Endothelial cell of umbilical vein (primary cell): ENCODE measurements at regions of chr11 and their contacts with region 1.

Region 1: DNA sequence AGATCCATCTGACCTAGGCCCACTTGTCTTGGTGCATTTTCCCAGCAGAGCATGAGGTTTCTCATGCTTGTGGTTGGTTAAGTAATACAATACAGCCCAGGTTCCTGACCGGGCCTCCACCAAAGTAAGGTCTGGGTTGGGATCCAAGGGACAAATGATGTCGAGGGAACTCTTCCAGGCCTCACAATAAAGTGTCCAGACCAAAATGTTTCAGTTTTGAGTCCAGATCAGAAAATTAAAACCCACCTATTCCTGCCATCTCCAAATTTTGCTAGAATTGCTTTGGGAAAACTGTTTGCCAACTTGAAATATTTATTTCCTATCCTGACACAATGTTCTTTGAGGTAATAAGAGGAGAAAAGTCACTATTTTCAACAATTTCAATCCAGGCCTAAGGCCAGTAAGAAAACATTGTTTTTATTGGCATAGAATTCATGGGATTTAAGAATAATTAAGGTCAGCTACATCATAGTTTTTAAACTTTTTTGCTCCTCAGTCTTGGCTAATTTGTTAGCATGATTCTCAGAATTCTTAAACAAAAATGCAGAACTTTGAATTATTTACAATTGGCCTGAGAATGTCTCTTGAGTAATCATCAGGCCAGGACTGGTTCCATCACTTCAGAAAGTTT is 51.4 kb downstream of the ME3 start:
- DNase-seq: peak; percentile 73
- H3K4me3 ChIP-seq: no peak overlapping the region
- H3K27ac ChIP-seq: peak overlapping the region; percentile 35
- H3K4me1 ChIP-seq: peaks cover 9% of the 10 kb centered on the region
- H3K27me3 ChIP-seq: no peaks in the 10 kb centered on the region
- CTCF ChIP-seq: no peak
- POLR2A ChIP-seq: no peak

Region 2: DNA sequence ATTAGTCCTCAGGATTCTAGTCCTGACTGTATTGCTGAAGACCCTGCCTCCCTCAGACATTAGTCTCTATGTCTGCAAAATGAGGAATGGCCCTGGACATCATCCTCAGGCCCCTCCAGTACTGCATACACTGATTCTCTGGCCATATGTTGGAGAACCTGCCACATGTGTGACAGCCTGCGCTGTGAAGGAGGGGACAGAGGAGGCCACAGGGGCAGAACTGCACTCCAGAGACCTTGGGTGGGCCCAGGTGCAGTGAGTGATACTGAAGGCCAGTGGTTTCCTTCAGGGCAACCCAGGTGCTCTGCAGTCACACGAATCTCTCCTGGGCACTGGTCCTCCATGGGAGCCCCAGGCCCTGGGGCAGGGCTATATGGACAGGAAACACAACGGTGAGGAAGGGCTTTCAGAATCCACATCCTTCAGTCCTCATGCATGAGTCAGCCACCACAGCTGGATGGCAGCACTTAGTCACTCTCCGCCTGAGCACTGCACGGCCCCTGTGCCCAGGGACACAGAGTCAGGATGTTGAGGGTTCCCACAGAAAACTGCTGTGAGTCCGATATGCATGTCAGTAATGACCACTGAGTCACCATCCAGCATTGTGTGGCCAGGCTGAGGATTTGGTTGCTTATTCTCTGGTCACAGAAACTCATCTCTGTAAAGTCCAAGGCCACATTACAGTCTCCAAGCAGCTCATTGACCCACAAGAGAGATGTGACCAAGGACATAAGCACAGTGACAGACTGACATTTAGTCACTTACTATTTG is 11.7 kb after region 1 on chr11:
- CTCF ChIA-PET with region 1: interaction called, 10 read pairs
- POLR2A ChIA-PET with region 1: no interaction called
- dilution Hi-C with region 1: no loop called
- intact Hi-C with region 1: no loop called
- DNase-seq: peak; percentile 96
- H3K4me3 ChIP-seq: no peak overlapping the region
- H3K27ac ChIP-seq: peak overlapping the region; percentile 83
- H3K4me1 ChIP-seq: peaks cover 19% of the 10 kb centered on the region
- H3K27me3 ChIP-seq: no peaks in the 10 kb centered on the region
- CTCF ChIP-seq: peak in 1 of 2 donors; percentile 55
- POLR2A ChIP-seq: no peak